CD4-positive, alpha-beta memory T cell (primary cell): ENCODE measurements at regions of chr12 and their contacts with region 1.

Region 1: GRCh38 chr12:7142056-7142644 is 12.0 kb downstream of the CLSTN3 start:
- DNase-seq: peak; percentile 40 to 53 (median 44)
- H3K4me3 ChIP-seq: no peak overlapping the region
- H3K4me3 Mint-ChIP-seq: no peak overlapping the region
- H3K27ac ChIP-seq: no peak overlapping the region
- H3K27ac Mint-ChIP-seq: peak overlapping the region in 4 of 7 donors; percentile 16 to 80 (median 43)
- H3K4me1 ChIP-seq: no peaks in the 10 kb centered on the region
- H3K4me1 Mint-ChIP-seq: peaks cover 0 to 12% (median 4%) of the 10 kb centered on the region in 4 donors
- H3K27me3 ChIP-seq: no peaks in the 10 kb centered on the region
- H3K27me3 Mint-ChIP-seq: no peaks in the 10 kb centered on the region

Region 2: DNA sequence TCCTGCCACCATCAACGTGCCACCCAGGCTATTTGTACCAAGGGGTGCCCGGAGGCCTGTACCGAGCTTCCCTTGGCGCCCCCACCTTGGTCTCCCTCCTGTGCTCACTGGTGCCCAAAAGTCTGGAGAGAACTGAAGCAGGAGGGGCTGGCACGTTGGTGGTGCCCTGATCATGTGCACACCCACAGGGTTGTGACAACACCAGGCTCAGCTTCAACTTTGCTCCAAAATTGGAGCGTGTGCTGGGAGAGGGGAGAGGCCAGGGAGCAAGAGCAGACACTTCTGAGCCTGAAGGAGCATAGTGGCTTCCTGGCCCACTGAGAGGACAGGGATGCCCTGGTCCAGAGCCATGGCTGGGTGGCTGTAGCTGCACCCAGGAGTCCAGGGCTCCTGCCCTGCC is 110.8 kb before region 1 on chr12:
- CTCF ChIA-PET with region 1: no interaction called
- POLR2A ChIA-PET with region 1: no interaction called
- intact Hi-C with region 1: no loop called
- DNase-seq: no peak
- H3K4me3 ChIP-seq: no peak overlapping the region
- H3K4me3 Mint-ChIP-seq: no peak overlapping the region
- H3K27ac ChIP-seq: no peak overlapping the region
- H3K27ac Mint-ChIP-seq: no peak overlapping the region
- H3K4me1 ChIP-seq: no peaks in the 10 kb centered on the region
- H3K4me1 Mint-ChIP-seq: no peaks in the 10 kb centered on the region
- H3K27me3 ChIP-seq: no peaks in the 10 kb centered on the region
- H3K27me3 Mint-ChIP-seq: no peaks in the 10 kb centered on the region

Region 3: GRCh38 chr12:7060353-7060954 is 81.7 kb before region 1 on chr12 and contains the start of gene C1S:
- CTCF ChIA-PET with region 1: no interaction called
- POLR2A ChIA-PET with region 1: no interaction called
- intact Hi-C with region 1: no loop called
- DNase-seq: no peak
- H3K4me3 ChIP-seq: no peak within 1 kb of the TSS
- H3K4me3 Mint-ChIP-seq: no peak within 1 kb of the TSS
- H3K27ac ChIP-seq: no peak within 1 kb of the TSS
- H3K27ac Mint-ChIP-seq: peak within 1 kb of the TSS in 1 of 7 donors; percentile 7
- H3K4me1 ChIP-seq: no peaks in the 10 kb centered on the region
- H3K4me1 Mint-ChIP-seq: no peaks in the 10 kb centered on the region
- H3K27me3 ChIP-seq: peaks cover 5% of the 10 kb centered on the region
- H3K27me3 Mint-ChIP-seq: peaks cover 23% of the 10 kb centered on the region in 2 donors
- total RNA-seq, gene C1S: 1.3 to 2.6 TPM

Region 4: DNA sequence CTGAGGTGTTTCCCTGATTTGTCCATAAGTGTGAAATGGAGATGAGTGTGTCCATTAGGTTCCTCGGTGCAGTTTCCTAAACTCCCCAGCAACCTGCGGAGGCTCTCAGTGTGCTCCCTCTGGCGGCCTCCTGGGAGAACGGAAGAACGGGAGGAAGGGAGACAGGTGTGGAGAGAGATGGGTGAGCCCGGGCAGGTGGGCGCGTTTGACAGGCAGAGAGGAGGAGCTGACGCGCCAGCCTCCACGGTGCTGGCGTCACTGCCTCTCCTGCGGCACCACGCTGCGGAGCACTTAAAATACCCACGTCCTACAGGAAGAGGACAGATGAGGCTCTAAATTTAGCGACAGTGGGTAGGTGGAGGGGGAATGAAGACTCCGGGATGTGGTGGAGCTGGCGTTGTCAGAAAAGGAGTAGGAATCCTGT is 20.6 kb after region 1 on chr12:
- CTCF ChIA-PET with region 1: interaction called, 17 read pairs
- POLR2A ChIA-PET with region 1: no interaction called
- intact Hi-C with region 1: no loop called
- DNase-seq: peak; percentile 2 to 46 (median 19)
- H3K4me3 ChIP-seq: no peak overlapping the region
- H3K4me3 Mint-ChIP-seq: peak overlapping the region in 7 of 8 donors; percentile 44 to 78 (median 63)
- H3K27ac ChIP-seq: no peak overlapping the region
- H3K27ac Mint-ChIP-seq: peak overlapping the region in 3 of 7 donors; percentile 25 to 72 (median 30)
- H3K4me1 ChIP-seq: peaks cover 5% of the 10 kb centered on the region
- H3K4me1 Mint-ChIP-seq: peaks cover 5 to 14% (median 11%) of the 10 kb centered on the region in 4 donors
- H3K27me3 ChIP-seq: no peaks in the 10 kb centered on the region
- H3K27me3 Mint-ChIP-seq: peaks cover 7 to 13% of the 10 kb centered on the region in 2 donors

Region 5: GRCh38 chr12:7178481-7178880 is 36.3 kb after region 1 on chr12:
- CTCF ChIA-PET with region 1: no interaction called
- POLR2A ChIA-PET with region 1: no interaction called
- intact Hi-C with region 1: no loop called
- DNase-seq: no peak
- H3K4me3 ChIP-seq: no peak overlapping the region
- H3K4me3 Mint-ChIP-seq: no peak overlapping the region
- H3K27ac ChIP-seq: no peak overlapping the region
- H3K27ac Mint-ChIP-seq: no peak overlapping the region
- H3K4me1 ChIP-seq: no peaks in the 10 kb centered on the region
- H3K4me1 Mint-ChIP-seq: no peaks in the 10 kb centered on the region
- H3K27me3 ChIP-seq: no peaks in the 10 kb centered on the region
- H3K27me3 Mint-ChIP-seq: peaks cover 27 to 47% of the 10 kb centered on the region in 2 donors

Region 6: GRCh38 chr12:7188562-7189397 is 46.6 kb after region 1 on chr12:
- CTCF ChIA-PET with region 1: interaction called, 37 read pairs
- POLR2A ChIA-PET with region 1: interaction called, 4 read pairs
- intact Hi-C with region 1: loop called (anchors 1 kb)
- DNase-seq: peak; percentile 52 to 64 (median 57)
- H3K4me3 ChIP-seq: peak overlapping the region; percentile 82 to 99
- H3K4me3 Mint-ChIP-seq: peak overlapping the region; percentile 95 to 100 (median 98)
- H3K27ac ChIP-seq: peak overlapping the region; percentile 94
- H3K27ac Mint-ChIP-seq: peak overlapping the region; percentile 96 to 99 (median 99)
- H3K4me1 ChIP-seq: peaks cover 39% of the 10 kb centered on the region
- H3K4me1 Mint-ChIP-seq: peaks cover 23 to 55% (median 37%) of the 10 kb centered on the region in 4 donors
- H3K27me3 ChIP-seq: no peaks in the 10 kb centered on the region
- H3K27me3 Mint-ChIP-seq: no peaks in the 10 kb centered on the region

Region 7: GRCh38 chr12:7282844-7283243 is 140.7 kb after region 1 on chr12:
- CTCF ChIA-PET with region 1: no interaction called
- POLR2A ChIA-PET with region 1: no interaction called
- intact Hi-C with region 1: no loop called
- DNase-seq: no peak
- H3K4me3 ChIP-seq: no peak overlapping the region
- H3K4me3 Mint-ChIP-seq: no peak overlapping the region
- H3K27ac ChIP-seq: no peak overlapping the region
- H3K27ac Mint-ChIP-seq: no peak overlapping the region
- H3K4me1 ChIP-seq: no peaks in the 10 kb centered on the region
- H3K4me1 Mint-ChIP-seq: no peaks in the 10 kb centered on the region
- H3K27me3 ChIP-seq: no peaks in the 10 kb centered on the region
- H3K27me3 Mint-ChIP-seq: peaks cover 12 to 21% of the 10 kb centered on the region in 2 donors